A673 (cell line): ENCODE measurements at regions of chr12 and their contacts with region 1.

Region 1: GRCh38 chr12:95217377-95218149 is at the starts of genes FGD6 and VEZT:
- DNase-seq: peak; percentile 100
- H3K4me3 ChIP-seq: peak within 1 kb of the TSS; percentile 76
- H3K27ac ChIP-seq: peak within 1 kb of the TSS; percentile 90
- H3K4me1 ChIP-seq: peaks cover 13% of the 10 kb centered on the region
- H3K27me3 ChIP-seq: no peaks in the 10 kb centered on the region
- CTCF ChIP-seq: peak; percentile 55
- total RNA-seq, gene FGD6: 11.7 and 12.6 TPM in 2 replicates
- total RNA-seq, gene VEZT: 107 and 111 TPM in 2 replicates

Region 2: DNA sequence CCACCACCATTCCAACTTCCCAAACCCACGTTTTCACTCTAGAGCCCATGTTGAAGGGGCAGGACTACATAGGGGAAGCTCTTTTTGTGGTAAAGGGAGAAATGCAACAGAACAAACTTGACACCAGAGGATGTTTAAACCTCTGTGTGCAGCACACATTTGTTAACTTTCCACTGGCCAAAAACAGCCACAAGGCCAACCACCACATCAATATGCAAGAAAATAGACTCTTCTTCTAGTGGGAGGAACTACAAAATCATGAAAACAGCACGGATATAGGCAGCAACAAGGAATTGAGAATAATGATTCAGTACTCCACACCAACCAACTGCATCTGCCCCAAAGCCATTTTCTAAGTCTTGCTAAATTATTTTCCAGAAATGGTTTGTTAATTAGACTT is 691.6 kb before region 1 on chr12:
- CTCF ChIA-PET with region 1: no interaction called
- POLR2A ChIA-PET with region 1: no interaction called
- intact Hi-C with region 1: no loop called
- DNase-seq: no peak
- H3K4me3 ChIP-seq: no peak overlapping the region
- H3K27ac ChIP-seq: no peak overlapping the region
- H3K4me1 ChIP-seq: no peaks in the 10 kb centered on the region
- H3K27me3 ChIP-seq: peaks cover 10% of the 10 kb centered on the region
- CTCF ChIP-seq: no peak

Region 3: GRCh38 chr12:95117178-95117599 is 100.4 kb before region 1 on chr12:
- CTCF ChIA-PET with region 1: no interaction called
- POLR2A ChIA-PET with region 1: no interaction called
- intact Hi-C with region 1: loop called (anchors 2 kb)
- DNase-seq: peak; percentile 84
- H3K4me3 ChIP-seq: no peak overlapping the region
- H3K27ac ChIP-seq: no peak overlapping the region
- H3K4me1 ChIP-seq: no peaks in the 10 kb centered on the region
- H3K27me3 ChIP-seq: no peaks in the 10 kb centered on the region
- CTCF ChIP-seq: peak; percentile 78

Region 4: GRCh38 chr12:95130096-95130495 is 87.5 kb before region 1 on chr12:
- CTCF ChIA-PET with region 1: no interaction called
- POLR2A ChIA-PET with region 1: no interaction called
- intact Hi-C with region 1: loop called (anchors 5 kb)
- DNase-seq: peak; percentile 64
- H3K4me3 ChIP-seq: no peak overlapping the region
- H3K27ac ChIP-seq: no peak overlapping the region
- H3K4me1 ChIP-seq: peaks cover 7% of the 10 kb centered on the region
- H3K27me3 ChIP-seq: no peaks in the 10 kb centered on the region
- CTCF ChIP-seq: no peak

Region 5: GRCh38 chr12:95206916-95207315 is 10.6 kb before region 1 on chr12:
- CTCF ChIA-PET with region 1: no interaction called
- POLR2A ChIA-PET with region 1: no interaction called
- intact Hi-C with region 1: no loop called
- DNase-seq: no peak
- H3K4me3 ChIP-seq: no peak overlapping the region
- H3K27ac ChIP-seq: no peak overlapping the region
- H3K4me1 ChIP-seq: peaks cover 34% of the 10 kb centered on the region
- H3K27me3 ChIP-seq: no peaks in the 10 kb centered on the region
- CTCF ChIP-seq: no peak

Region 6: GRCh38 chr12:95231190-95231589 is 13.6 kb after region 1 on chr12:
- CTCF ChIA-PET with region 1: interaction called, 10 read pairs
- POLR2A ChIA-PET with region 1: no interaction called
- intact Hi-C with region 1: no loop called
- DNase-seq: peak; percentile 65
- H3K4me3 ChIP-seq: no peak overlapping the region
- H3K27ac ChIP-seq: peak overlapping the region; percentile 36
- H3K4me1 ChIP-seq: peaks cover 42% of the 10 kb centered on the region
- H3K27me3 ChIP-seq: no peaks in the 10 kb centered on the region
- CTCF ChIP-seq: no peak

Region 7: GRCh38 chr12:95473884-95474659 is 256.5 kb after region 1 on chr12 and contains the start of gene METAP2:
- CTCF ChIA-PET with region 1: no interaction called
- POLR2A ChIA-PET with region 1: no interaction called
- intact Hi-C with region 1: loop called (anchors 5 kb)
- DNase-seq: peak; percentile 98
- H3K4me3 ChIP-seq: peak within 1 kb of the TSS; percentile 96
- H3K27ac ChIP-seq: peak within 1 kb of the TSS; percentile 94
- H3K4me1 ChIP-seq: peaks cover 7% of the 10 kb centered on the region
- H3K27me3 ChIP-seq: no peaks in the 10 kb centered on the region
- CTCF ChIP-seq: no peak
- total RNA-seq, gene METAP2: 135 and 136 TPM in 2 replicates